ENCODE measurements at regions of chr15 and their contacts with region 1.

Region 1: GRCh38 chr15:43510200-43511011 is 7.0 kb upstream of the MAP1A start:
- DNase-seq: peak; percentile 85
- H3K4me3 ChIP-seq: peak overlapping the region; percentile 68
- CTCF ChIP-seq: peak; percentile 42

Region 2: DNA sequence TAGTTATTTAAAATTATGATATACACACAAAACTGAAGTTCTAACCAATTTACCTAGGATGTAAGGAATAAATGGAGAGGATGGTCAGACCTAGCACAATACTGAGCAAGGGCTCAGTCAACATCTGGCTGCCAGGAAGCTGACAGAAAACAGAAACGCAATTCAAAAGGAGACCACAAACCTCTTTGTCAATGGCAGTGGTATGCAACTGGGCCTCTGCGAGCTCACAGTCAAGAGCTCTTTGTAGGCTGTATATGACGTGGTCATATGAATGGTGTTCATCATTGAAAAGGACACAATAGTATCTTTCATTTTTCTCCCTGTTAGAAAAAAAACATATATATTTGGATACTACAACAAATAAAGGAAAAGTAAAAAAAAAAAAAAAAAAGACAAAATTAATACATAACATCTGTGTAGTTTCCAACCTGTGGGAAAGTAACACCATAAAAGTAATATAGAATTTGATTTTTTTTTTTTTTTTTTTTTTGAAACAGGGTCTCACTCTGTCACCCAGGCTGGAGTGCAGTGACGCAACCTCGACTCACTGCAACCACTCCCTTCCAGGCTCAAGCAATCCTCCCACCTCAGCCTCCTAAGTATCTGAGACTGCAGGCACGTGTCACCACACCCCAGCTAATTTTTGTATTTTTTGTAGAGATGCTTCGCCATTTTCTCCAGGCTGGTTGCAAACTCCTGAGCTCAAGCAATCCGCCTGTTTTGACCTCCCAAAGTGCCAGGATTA is 442.5 kb before region 1 on chr15:
- CTCF ChIA-PET with region 1: no interaction called
- POLR2A ChIA-PET with region 1: no interaction called
- DNase-seq: no peak
- H3K4me3 ChIP-seq: no peak overlapping the region
- CTCF ChIP-seq: no peak

Region 3: GRCh38 chr15:43249699-43250203 is 260.7 kb before region 1 on chr15:
- CTCF ChIA-PET with region 1: no interaction called
- POLR2A ChIA-PET with region 1: no interaction called
- DNase-seq: peak; percentile 24
- H3K4me3 ChIP-seq: no peak overlapping the region
- CTCF ChIP-seq: no peak

Region 4: GRCh38 chr15:43440721-43441281 is 69.6 kb before region 1 on chr15:
- CTCF ChIA-PET with region 1: interaction called, 22 read pairs
- POLR2A ChIA-PET with region 1: no interaction called
- DNase-seq: peak; percentile 90
- H3K4me3 ChIP-seq: no peak overlapping the region
- CTCF ChIP-seq: peak; percentile 43

Region 5: DNA sequence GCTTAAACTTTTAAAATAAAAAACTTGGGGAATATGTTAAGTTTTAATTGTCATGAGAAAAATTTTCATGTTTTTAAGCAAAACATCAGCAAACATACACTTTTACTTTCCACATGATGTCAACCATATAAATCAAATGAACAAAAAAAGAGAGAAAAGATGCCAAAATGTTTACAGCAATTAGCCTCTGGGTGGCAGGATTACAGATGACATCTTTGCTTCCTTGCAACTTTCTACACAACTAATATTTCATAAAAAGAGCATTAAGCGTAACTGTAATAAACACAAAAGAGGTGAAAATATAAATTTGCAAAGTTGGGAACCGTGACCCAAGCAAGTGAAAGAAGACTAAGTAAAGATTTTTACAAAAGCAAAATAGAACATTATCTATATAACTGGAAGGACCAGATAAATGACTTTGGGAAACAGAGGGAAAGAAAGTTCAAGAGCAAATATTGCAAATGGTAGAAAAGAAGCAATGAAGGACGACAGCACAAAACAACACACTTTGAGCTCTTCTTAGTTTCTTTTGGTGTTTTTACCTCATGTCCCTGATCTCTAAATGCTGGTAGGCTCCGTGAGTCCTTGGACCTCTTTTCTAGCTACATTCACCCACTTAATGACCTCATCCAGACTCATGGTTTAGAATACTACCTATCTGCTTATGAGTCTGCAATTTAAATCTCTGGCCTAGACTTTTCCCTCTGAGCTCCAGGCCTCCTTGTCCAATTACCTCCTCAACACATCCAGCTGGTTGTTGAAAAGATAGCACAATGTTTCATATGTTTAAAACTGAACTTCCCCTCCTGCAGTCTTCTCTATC is 26.9 kb before region 1 on chr15:
- CTCF ChIA-PET with region 1: interaction called, 16 read pairs
- POLR2A ChIA-PET with region 1: no interaction called
- DNase-seq: no peak
- H3K4me3 ChIP-seq: no peak overlapping the region
- CTCF ChIP-seq: peak; percentile 33

Region 6: GRCh38 chr15:43492673-43493601 is 17.5 kb before region 1 on chr15 and contains the start of gene TP53BP1:
- CTCF ChIA-PET with region 1: interaction called, 14 read pairs
- POLR2A ChIA-PET with region 1: interaction called, 16 read pairs
- DNase-seq: peak; percentile 64
- H3K4me3 ChIP-seq: peak within 1 kb of the TSS; percentile 94
- CTCF ChIP-seq: no peak

Region 7: DNA sequence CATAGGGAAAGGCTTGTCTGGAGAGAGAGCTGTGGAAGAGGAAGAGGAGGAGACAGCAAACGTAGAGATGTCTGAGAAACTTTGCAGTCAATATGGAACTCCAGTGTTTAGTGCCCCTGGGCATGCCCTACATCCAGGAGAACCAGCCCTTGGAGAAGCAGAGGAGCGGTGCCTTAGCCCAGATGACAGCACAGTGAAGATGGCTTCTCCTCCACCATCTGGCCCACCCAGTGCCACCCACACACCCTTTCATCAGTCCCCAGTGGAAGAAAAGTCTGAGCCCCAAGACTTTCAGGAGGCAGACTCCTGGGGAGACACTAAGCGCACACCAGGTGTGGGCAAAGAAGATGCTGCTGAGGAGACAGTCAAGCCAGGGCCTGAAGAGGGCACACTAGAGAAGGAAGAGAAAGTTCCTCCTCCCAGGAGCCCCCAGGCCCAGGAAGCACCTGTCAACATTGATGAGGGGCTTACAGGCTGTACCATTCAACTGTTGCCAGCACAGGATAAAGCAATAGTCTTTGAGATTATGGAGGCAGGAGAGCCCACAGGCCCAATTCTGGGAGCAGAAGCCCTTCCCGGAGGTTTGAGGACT is 13.9 kb after region 1 on chr15:
- CTCF ChIA-PET with region 1: interaction called, 37 read pairs
- POLR2A ChIA-PET with region 1: interaction called, 4 read pairs
- DNase-seq: no peak
- H3K4me3 ChIP-seq: no peak overlapping the region
- CTCF ChIP-seq: no peak

Region 8: GRCh38 chr15:43531018-43531670 is 20.7 kb after region 1 on chr15:
- CTCF ChIA-PET with region 1: interaction called, 37 read pairs
- POLR2A ChIA-PET with region 1: interaction called, 4 read pairs
- DNase-seq: no peak
- H3K4me3 ChIP-seq: no peak overlapping the region
- CTCF ChIP-seq: no peak

Region 9: DNA sequence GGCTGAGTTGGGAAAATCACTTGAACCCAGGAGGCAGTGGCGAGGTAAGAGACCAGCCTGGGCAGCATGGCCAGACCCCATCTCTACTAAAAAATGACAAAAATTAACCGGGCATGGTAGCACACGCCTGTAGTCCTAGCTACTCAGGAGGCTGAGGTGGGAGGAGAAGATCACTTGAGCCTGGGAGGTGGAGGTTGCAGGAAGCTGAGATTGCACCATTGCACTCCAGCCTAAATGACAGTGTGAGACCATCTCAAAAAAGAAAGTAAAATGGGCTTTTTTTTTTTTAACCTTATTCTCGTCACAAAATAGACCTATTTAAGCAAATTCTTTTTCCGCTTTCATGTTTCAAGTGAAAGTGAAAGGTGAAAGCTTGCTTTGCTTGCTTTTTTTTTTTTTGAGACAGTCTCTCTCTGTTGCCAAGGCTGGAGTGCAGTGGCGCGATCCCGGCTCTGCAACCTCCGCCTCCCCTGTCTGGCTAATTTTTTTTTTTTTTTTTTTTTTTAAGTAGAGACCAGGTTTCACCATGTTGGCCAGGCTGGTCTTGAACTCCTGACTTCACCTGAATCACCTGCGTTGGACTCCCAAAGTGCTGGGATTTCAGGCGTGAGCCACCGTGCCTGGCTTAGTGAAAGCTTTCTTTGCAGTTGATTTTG is 239.4 kb after region 1 on chr15:
- CTCF ChIA-PET with region 1: no interaction called
- POLR2A ChIA-PET with region 1: no interaction called
- DNase-seq: no peak
- H3K4me3 ChIP-seq: no peak overlapping the region
- CTCF ChIP-seq: no peak

Region 10: DNA sequence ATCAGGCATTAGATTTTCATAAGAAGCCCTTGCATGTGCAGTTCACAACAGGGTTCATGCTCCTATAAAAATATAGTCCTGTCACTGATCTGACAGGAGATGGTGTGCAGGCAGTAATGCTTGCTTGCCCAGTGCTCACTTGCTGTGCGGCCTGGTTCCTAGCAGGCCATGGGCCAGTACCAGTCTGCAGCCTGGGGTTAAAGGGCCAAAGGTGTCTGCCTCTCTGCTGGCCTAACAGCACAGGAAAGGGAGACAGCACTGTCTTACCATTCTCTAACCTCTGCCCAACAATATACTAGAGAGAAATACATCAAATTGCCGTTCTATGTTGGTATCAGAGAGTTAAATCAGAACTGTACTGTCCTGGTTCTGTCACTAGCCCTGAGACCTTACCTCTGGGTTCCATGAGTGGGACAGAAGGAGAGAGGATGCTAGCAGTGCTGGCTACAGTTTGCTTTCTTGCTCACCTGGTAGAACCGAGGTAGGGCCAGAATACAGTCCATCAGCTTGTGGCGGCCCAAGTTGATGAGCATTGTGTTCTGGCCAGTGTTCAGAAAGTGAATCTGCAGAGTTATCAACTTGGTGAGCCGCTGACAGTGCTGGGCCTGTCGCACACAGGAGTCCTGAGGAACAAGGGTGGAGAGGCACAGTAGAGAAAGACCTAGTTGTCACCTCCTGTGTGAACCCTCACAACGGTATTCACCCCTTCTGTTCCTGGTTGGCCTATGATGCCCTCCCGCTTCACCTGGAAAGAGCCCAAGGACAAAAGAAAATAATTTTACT is 1055.2 kb after region 1 on chr15:
- CTCF ChIA-PET with region 1: no interaction called
- POLR2A ChIA-PET with region 1: no interaction called
- DNase-seq: no peak
- H3K4me3 ChIP-seq: no peak overlapping the region
- CTCF ChIP-seq: no peak